ENCODE measurements at regions of chr14 and their contacts with region 1.

Region 1: GRCh38 chr14:103808403-103809001 is 38.9 kb downstream of the PPP1R13B start:
- DNase-seq: peak; percentile 58
- ATAC-seq: peak; percentile 92
- H3K4me3 ChIP-seq: no peak overlapping the region
- H3K27ac ChIP-seq: no peak overlapping the region
- H3K4me1 ChIP-seq: no peaks in the 10 kb centered on the region
- H3K27me3 ChIP-seq: no peaks in the 10 kb centered on the region
- CTCF ChIP-seq: peak; percentile 88
- EP300 ChIP-seq: no peak
- POLR2A ChIP-seq: no peak
- RAD21 ChIP-seq: peak; percentile 86

Region 2: GRCh38 chr14:103847451-103848188 is 39.1 kb after region 1 on chr14 and contains the start of gene PPP1R13B:
- CTCF ChIA-PET with region 1: no interaction called
- POLR2A ChIA-PET with region 1: no interaction called
- in situ Hi-C with region 1: no loop called
- intact Hi-C with region 1: loop called (anchors 5 kb)
- DNase-seq: peak; percentile 78
- ATAC-seq: peak; percentile 80
- H3K4me3 ChIP-seq: peak within 1 kb of the TSS; percentile 83 to 92 (median 88)
- H3K27ac ChIP-seq: peak within 1 kb of the TSS; percentile 63
- H3K4me1 ChIP-seq: peaks cover 44% of the 10 kb centered on the region
- H3K27me3 ChIP-seq: no peaks in the 10 kb centered on the region; a peak in 1 of 5 replicates
- CTCF ChIP-seq: no peak
- EP300 ChIP-seq: no peak
- POLR2A ChIP-seq: peak in 1 of 2 experiments; percentile 82; a peak in 2 of 4 replicates
- RAD21 ChIP-seq: peak; percentile 59
- total RNA-seq, gene PPP1R13B: 5.3 and 9.4 TPM in 2 replicates

Region 3: DNA sequence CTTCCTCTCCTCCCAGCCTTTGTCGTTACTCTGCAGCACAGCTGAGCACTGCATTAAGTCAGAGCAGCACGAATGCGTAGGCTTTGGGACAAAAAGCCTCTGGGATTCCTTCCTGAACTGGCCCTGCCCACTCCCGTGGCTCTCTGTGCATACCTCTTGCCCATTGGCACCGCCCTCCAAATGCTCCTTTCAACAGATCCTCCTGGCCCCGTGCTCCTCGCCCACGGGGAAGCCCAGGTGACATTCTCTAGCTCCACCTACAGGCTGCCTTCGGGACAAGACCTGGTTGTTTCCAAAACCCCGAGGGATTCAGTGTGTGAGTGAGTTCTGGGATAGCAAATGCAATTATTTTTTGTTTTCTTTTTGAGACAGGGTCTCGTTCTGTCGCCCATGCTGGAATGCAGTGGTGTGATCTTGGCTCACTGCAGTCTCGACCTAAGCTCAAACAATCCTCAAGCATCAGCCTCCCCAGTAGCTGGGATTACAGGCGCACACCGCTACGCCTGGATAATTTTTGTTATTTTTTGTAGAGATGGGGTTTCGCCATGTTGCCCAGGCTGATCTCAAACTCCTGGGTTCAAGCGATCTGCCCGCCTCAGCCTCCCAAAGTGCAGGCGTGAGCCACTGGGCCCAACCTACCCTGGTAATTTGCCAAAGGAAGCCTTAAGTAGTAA is 101.9 kb after region 1 on chr14:
- CTCF ChIA-PET with region 1: interaction called, 48 read pairs
- POLR2A ChIA-PET with region 1: interaction called, 3 read pairs
- in situ Hi-C with region 1: loop called (anchors 5 kb)
- intact Hi-C with region 1: loop called (anchors 1 kb)
- DNase-seq: peak; percentile 84
- ATAC-seq: peak; percentile 94
- H3K4me3 ChIP-seq: no peak overlapping the region; a peak in 1 of 6 replicates
- H3K27ac ChIP-seq: no peak overlapping the region
- H3K4me1 ChIP-seq: peaks cover 16% of the 10 kb centered on the region
- H3K27me3 ChIP-seq: no peaks in the 10 kb centered on the region
- CTCF ChIP-seq: peak; percentile 94
- EP300 ChIP-seq: 0 out of 4 replicates have a peak, but pooled peaks of 1 of the 2 experiments have one; percentile 15
- POLR2A ChIP-seq: no peak
- RAD21 ChIP-seq: peak; percentile 85

Region 4: DNA sequence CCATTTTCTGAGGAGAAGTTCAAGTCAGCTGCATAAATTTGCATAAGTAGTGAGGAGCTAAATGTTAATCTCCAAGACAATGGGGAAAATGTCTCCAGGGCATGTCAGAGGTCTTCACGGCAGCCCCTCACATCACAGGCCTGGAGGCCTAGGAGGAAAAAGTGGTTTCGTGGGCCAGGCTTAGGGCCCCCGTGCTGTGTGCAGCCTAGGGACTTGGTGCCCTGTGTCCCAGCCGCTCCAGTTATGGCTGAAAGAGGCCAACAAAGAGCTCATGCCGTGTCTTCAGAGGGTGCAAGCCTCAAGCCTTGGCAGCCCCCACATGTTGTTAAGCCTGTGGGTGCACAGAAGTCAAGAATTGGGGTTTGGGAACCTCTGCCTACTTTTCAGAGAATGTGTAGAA is 175.7 kb after region 1 on chr14:
- CTCF ChIA-PET with region 1: interaction called, 6 read pairs
- POLR2A ChIA-PET with region 1: no interaction called
- in situ Hi-C with region 1: no loop called
- intact Hi-C with region 1: loop called (anchors 1 kb)
- DNase-seq: no peak
- ATAC-seq: no peak
- H3K4me3 ChIP-seq: no peak overlapping the region
- H3K27ac ChIP-seq: no peak overlapping the region
- H3K4me1 ChIP-seq: no peaks in the 10 kb centered on the region
- H3K27me3 ChIP-seq: peaks cover 0 to 18% of the 10 kb centered on the region in 2 experiments; a peak in 2 of 5 replicates
- CTCF ChIP-seq: no peak
- EP300 ChIP-seq: no peak
- POLR2A ChIP-seq: no peak
- RAD21 ChIP-seq: no peak

Region 5: GRCh38 chr14:104116756-104117255 is 308.3 kb after region 1 on chr14:
- CTCF ChIA-PET with region 1: no interaction called
- POLR2A ChIA-PET with region 1: no interaction called
- in situ Hi-C with region 1: no loop called
- intact Hi-C with region 1: no loop called
- DNase-seq: no peak
- ATAC-seq: no peak
- H3K4me3 ChIP-seq: no peak overlapping the region; a peak in 1 of 6 replicates
- H3K27ac ChIP-seq: no peak overlapping the region
- H3K4me1 ChIP-seq: no peaks in the 10 kb centered on the region
- H3K27me3 ChIP-seq: peaks cover 5 to 29% of the 10 kb centered on the region in 2 experiments
- CTCF ChIP-seq: no peak
- EP300 ChIP-seq: no peak
- POLR2A ChIP-seq: no peak
- RAD21 ChIP-seq: no peak

Measured in HepG2 (cell line).